Ascending aorta (tissue), 2 donors: ENCODE measurements at regions of chr15 and their contacts with region 1.

Region 1: GRCh38 chr15:66386204-66387123 is at the start of gene MAP2K1:
- DNase-seq: peak; percentile 93 to 99
- H3K4me3 ChIP-seq: peak within 1 kb of the TSS; percentile 53 to 99
- H3K27ac ChIP-seq: peak within 1 kb of the TSS; percentile 88 to 99
- H3K4me1 ChIP-seq: peaks cover 6 to 10% of the 10 kb centered on the region in 2 donors
- H3K27me3 ChIP-seq: no peaks in the 10 kb centered on the region
- CTCF ChIP-seq: peak; percentile 58 to 89 (median 78)
- total RNA-seq, gene MAP2K1: 21.2 TPM

Region 2: DNA sequence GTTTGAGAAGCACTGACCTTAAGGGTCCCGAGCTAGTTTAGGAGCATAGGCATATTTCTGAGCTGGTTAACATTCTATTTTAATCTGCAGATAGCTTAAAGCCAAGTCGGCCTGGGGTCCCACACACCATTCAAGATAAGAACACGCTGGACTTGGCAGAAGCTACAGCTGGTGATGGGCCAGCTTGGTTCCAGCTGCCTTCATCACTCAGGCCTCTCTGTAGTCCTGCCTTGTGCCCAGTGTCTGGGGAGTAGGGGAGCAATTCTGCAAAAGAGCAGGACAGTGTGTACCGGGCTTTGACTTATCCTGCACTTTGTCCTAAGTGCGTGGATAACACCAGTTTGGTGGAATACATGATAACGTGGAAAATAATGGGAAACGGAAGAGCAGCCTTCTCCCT is 297.4 kb before region 1 on chr15:
- intact Hi-C with region 1: no loop called
- DNase-seq: peak in 1 of 2 donors; percentile 53
- H3K4me3 ChIP-seq: no peak overlapping the region
- H3K27ac ChIP-seq: no peak overlapping the region
- H3K4me1 ChIP-seq: peaks cover 0 to 7% of the 10 kb centered on the region in 2 donors
- H3K27me3 ChIP-seq: no peaks in the 10 kb centered on the region
- CTCF ChIP-seq: no peak

Region 3: DNA sequence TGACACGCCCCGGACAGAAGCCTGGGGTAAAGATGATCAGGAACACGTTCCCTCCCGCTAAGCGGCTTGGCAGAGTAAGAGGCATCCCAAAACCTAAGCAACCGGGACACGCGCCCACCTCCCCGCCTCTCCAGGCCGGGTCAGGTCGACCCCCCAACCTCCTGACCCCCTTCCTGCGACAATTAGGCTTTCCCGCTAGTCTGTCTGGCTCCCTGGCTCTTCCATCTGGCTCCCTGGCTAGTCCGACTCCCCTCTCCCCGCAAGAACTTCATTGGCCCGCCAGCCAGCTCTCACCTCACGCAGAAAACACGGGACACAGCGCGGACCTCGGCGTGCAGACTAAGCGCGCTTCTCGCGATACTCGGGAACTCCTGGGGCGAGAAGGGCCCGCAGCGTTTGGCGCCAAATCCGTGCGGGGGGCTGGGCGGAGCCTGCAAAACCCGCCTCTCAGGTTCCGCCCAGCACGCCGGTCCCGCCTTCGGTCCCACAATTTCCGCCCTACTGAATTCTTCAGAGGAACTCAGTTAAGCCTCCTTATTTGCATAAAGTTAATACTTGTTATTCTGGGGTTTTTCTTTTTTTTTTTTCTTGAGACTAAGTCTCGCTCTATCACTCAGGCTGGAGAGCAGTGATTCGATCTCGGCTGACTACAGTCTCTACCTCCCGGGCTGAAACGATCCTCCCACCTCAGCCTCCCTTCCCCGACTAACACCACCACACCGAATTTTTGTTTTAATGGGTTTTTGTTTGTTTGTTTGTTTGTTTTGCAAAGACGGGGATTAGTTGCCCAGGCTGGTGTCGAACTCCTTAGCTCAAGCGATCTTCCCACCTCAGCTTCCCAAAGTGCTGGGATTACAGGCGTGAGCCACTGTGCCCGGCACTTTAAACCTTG is 29.9 kb before region 1 on chr15 and contains the start of gene TIPIN:
- intact Hi-C with region 1: loop called (anchors 1 kb)
- DNase-seq: peak; percentile 79 to 98
- H3K4me3 ChIP-seq: peak within 1 kb of the TSS; percentile 73 to 80
- H3K27ac ChIP-seq: peak within 1 kb of the TSS; percentile 81 to 88
- H3K4me1 ChIP-seq: no peaks in the 10 kb centered on the region
- H3K27me3 ChIP-seq: no peaks in the 10 kb centered on the region
- CTCF ChIP-seq: no peak
- total RNA-seq, gene TIPIN: 6.1 TPM

Region 4: GRCh38 chr15:66411190-66411589 is 24.7 kb after region 1 on chr15:
- intact Hi-C with region 1: no loop called
- DNase-seq: no peak
- H3K4me3 ChIP-seq: no peak overlapping the region
- H3K27ac ChIP-seq: no peak overlapping the region
- H3K4me1 ChIP-seq: peaks cover 0 to 4% of the 10 kb centered on the region in 2 donors
- H3K27me3 ChIP-seq: no peaks in the 10 kb centered on the region
- CTCF ChIP-seq: no peak

Region 5: GRCh38 chr15:66497502-66498455 is 111.3 kb after region 1 on chr15 and contains the start of gene SNAPC5:
- intact Hi-C with region 1: loop called (anchors 1 kb)
- DNase-seq: peak; percentile 87 to 99
- H3K4me3 ChIP-seq: peak within 1 kb of the TSS; percentile 67 to 94
- H3K27ac ChIP-seq: peak within 1 kb of the TSS; percentile 87 to 91
- H3K4me1 ChIP-seq: peaks cover 5 to 14% of the 10 kb centered on the region in 2 donors
- H3K27me3 ChIP-seq: no peaks in the 10 kb centered on the region
- CTCF ChIP-seq: peak; percentile 95 to 98 (median 98)
- total RNA-seq, gene SNAPC5: 3.7 TPM

Region 6: DNA sequence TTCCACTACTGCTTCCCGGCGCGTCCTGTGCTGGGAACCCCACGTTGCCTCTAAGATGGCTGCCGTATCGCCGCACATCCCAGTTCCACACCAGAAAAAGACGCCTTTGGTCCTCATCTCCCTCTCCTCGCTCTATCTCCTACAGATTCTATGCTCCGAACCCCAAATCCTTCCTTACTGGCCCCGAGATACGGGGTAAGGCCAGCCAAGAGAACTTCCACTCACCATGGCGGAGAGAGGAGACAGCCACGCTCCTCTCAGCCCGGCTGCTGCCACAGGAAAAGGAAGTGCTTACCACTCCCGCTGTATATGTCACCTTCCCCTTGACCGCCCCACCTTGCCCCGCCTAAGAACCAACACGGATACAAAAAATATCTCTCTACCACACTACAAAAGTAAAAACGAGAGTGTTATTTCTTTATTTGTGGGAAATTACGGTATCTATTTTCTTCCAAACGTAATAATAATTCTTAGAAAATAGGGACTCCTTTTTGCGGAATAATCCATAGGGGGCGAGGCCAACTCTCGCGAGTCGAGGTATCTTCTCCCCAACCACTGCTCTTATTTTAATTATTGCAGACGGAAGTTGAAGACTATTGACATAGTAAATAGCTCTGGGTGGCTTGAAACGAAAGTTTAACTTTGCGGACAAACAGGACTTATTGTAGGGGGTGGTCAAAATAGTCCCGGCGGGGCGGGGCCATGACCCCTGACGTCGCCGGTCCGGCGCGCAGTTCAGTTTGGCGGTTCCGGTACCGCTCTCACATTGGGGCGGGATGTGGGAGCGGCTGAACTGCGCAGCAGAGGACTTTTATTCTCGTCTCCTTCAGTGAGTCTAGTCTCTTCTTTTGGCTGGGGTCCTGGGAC is 118.3 kb after region 1 on chr15 and contains the starts of genes RPL4 and ZWILCH:
- intact Hi-C with region 1: loop called (anchors 2 kb)
- DNase-seq: peak; percentile 22 to 89
- H3K4me3 ChIP-seq: peak within 1 kb of the TSS; percentile 82 to 87
- H3K27ac ChIP-seq: peak within 1 kb of the TSS; percentile 93 to 96
- H3K4me1 ChIP-seq: peaks cover 9 to 21% of the 10 kb centered on the region in 2 donors
- H3K27me3 ChIP-seq: no peaks in the 10 kb centered on the region
- CTCF ChIP-seq: no peak
- total RNA-seq, gene RPL4: 2,799 TPM
- total RNA-seq, gene ZWILCH: 2.3 TPM